CD4-positive, alpha-beta T cell (primary cell): ENCODE measurements at regions of chr13 and their contacts with region 1.

Region 1: GRCh38 chr13:27406178-27406939 is 18.1 kb upstream of the GTF3A start:
- DNase-seq: peak in 10 of 14 experiments; percentile 5 to 78 (median 23)
- ATAC-seq: peak; percentile 73
- H3K4me3 ChIP-seq: no peak overlapping the region
- H3K4me3 Mint-ChIP-seq: no peak overlapping the region
- H3K27ac ChIP-seq: no peak overlapping the region
- H3K27ac Mint-ChIP-seq: no peak overlapping the region
- H3K4me1 ChIP-seq: peaks cover 5% of the 10 kb centered on the region
- H3K4me1 Mint-ChIP-seq: no peaks in the 10 kb centered on the region
- H3K27me3 ChIP-seq: no peaks in the 10 kb centered on the region
- H3K27me3 Mint-ChIP-seq: peaks cover 17% of the 10 kb centered on the region
- CTCF ChIP-seq: peak; percentile 67

Region 2: DNA sequence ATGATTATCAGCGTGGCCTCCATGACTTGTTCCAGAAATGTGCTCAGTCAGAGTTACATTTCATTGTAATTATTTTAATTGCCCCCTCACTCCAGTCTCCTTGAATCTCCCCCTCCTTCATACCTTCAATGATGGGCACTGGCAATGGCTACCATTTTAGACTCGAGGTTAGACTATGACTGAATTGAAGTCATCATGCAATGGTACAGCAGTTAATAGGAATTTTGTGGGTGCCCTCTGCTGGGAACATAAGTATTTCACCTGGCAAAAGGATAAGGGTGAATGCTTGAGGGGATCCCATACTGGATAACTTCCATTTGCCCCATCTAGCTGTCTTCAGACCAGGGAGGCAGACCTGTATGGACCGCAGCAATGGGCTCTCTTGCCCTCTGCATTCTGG is 202.5 kb before region 1 on chr13:
- CTCF ChIA-PET with region 1: no interaction called
- POLR2A ChIA-PET with region 1: no interaction called
- intact Hi-C with region 1: no loop called
- DNase-seq: peak in 4 of 14 experiments; percentile 4 to 23 (median 14)
- ATAC-seq: no peak
- H3K4me3 ChIP-seq: no peak overlapping the region
- H3K4me3 Mint-ChIP-seq: no peak overlapping the region
- H3K27ac ChIP-seq: no peak overlapping the region
- H3K27ac Mint-ChIP-seq: no peak overlapping the region
- H3K4me1 ChIP-seq: no peaks in the 10 kb centered on the region
- H3K4me1 Mint-ChIP-seq: no peaks in the 10 kb centered on the region
- H3K27me3 ChIP-seq: no peaks in the 10 kb centered on the region
- H3K27me3 Mint-ChIP-seq: no peaks in the 10 kb centered on the region
- CTCF ChIP-seq: peak; percentile 29

Region 3: GRCh38 chr13:27424246-27425157 is 18.1 kb after region 1 on chr13 and contains the start of gene GTF3A:
- CTCF ChIA-PET with region 1: interaction called, 4 read pairs
- POLR2A ChIA-PET with region 1: interaction called, 3 read pairs
- intact Hi-C with region 1: loop called (anchors 1 to 2 kb)
- DNase-seq: peak; percentile 69 to 97 (median 87)
- ATAC-seq: peak; percentile 53
- H3K4me3 ChIP-seq: peak within 1 kb of the TSS; percentile 79
- H3K4me3 Mint-ChIP-seq: peak within 1 kb of the TSS; percentile 90
- H3K27ac ChIP-seq: peak within 1 kb of the TSS; percentile 91 to 95
- H3K27ac Mint-ChIP-seq: peak within 1 kb of the TSS; percentile 95
- H3K4me1 ChIP-seq: peaks cover 50% of the 10 kb centered on the region
- H3K4me1 Mint-ChIP-seq: peaks cover 39% of the 10 kb centered on the region
- H3K27me3 ChIP-seq: no peaks in the 10 kb centered on the region
- H3K27me3 Mint-ChIP-seq: no peaks in the 10 kb centered on the region
- CTCF ChIP-seq: no peak
- total RNA-seq, gene GTF3A: 129 to 132 TPM

Region 4: GRCh38 chr13:27481766-27482165 is 75.4 kb after region 1 on chr13:
- CTCF ChIA-PET with region 1: no interaction called
- POLR2A ChIA-PET with region 1: no interaction called
- intact Hi-C with region 1: loop called in 1 of 2 experiments (anchors 5 kb)
- DNase-seq: peak in 5 of 14 experiments; percentile 5 to 35 (median 16)
- ATAC-seq: no peak
- H3K4me3 ChIP-seq: no peak overlapping the region
- H3K4me3 Mint-ChIP-seq: no peak overlapping the region
- H3K27ac ChIP-seq: no peak overlapping the region
- H3K27ac Mint-ChIP-seq: no peak overlapping the region
- H3K4me1 ChIP-seq: peaks cover 6% of the 10 kb centered on the region
- H3K4me1 Mint-ChIP-seq: peaks cover 19% of the 10 kb centered on the region
- H3K27me3 ChIP-seq: no peaks in the 10 kb centered on the region
- H3K27me3 Mint-ChIP-seq: no peaks in the 10 kb centered on the region
- CTCF ChIP-seq: peak; percentile 30

Region 5: DNA sequence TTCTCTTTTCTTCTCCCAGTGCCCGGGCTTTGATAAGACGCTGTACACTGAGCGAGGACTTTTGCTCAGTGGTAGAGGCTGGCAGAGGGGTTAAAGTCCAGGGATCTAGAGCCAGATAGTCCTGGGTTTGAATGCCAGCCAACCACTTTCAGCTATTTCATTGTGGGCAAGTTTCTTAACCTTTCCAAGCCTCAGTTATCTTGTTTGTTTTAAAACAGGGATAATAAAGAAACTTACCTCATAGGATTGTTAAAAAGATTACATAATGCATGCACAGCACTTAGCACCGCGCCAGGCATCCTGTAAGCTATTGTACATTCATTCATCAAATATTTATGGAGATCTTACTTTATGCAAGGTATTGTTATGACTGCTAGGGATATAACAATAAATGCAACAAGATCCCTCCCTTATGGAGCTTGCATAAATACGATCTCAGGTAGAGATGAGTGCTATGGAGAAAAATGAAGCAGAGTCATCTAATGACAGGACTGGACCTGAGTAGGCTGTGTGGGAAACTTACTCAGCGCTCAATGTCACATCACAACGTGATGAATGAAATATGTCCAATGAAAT is 143.1 kb after region 1 on chr13:
- CTCF ChIA-PET with region 1: no interaction called
- POLR2A ChIA-PET with region 1: no interaction called
- intact Hi-C with region 1: loop called in 1 of 2 experiments (anchors 10 kb)
- DNase-seq: no peak
- ATAC-seq: no peak
- H3K4me3 ChIP-seq: no peak overlapping the region
- H3K4me3 Mint-ChIP-seq: no peak overlapping the region
- H3K27ac ChIP-seq: no peak overlapping the region
- H3K27ac Mint-ChIP-seq: no peak overlapping the region
- H3K4me1 ChIP-seq: no peaks in the 10 kb centered on the region
- H3K4me1 Mint-ChIP-seq: no peaks in the 10 kb centered on the region
- H3K27me3 ChIP-seq: no peaks in the 10 kb centered on the region
- H3K27me3 Mint-ChIP-seq: no peaks in the 10 kb centered on the region
- CTCF ChIP-seq: no peak

Region 6: DNA sequence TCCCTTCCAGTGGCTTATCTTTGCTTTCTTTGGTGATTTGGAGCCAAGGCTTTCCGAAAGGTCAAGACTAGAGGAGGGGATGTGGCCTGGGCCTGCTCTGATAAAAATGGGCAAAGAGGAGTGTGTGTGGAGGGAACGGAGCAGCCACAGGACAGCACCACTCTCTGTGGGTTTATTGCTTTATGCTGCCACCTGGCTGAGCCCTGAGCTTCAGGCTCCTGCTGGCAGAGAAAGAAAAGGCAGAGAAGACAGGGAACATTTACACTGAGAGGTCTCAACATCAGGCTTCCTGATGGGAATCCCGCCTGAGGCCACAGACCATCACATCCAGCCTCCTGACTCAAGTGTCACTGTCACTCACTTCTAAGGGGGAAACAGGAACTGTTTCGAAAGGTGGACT is 376.8 kb after region 1 on chr13:
- CTCF ChIA-PET with region 1: no interaction called
- POLR2A ChIA-PET with region 1: no interaction called
- intact Hi-C with region 1: loop called in 1 of 2 experiments (anchors 5 kb)
- DNase-seq: peak in 1 of 14 experiments; percentile 7
- ATAC-seq: no peak
- H3K4me3 ChIP-seq: no peak overlapping the region
- H3K4me3 Mint-ChIP-seq: no peak overlapping the region
- H3K27ac ChIP-seq: no peak overlapping the region
- H3K27ac Mint-ChIP-seq: no peak overlapping the region
- H3K4me1 ChIP-seq: no peaks in the 10 kb centered on the region
- H3K4me1 Mint-ChIP-seq: no peaks in the 10 kb centered on the region
- H3K27me3 ChIP-seq: peaks cover 7 to 46% of the 10 kb centered on the region in 2 experiments
- H3K27me3 Mint-ChIP-seq: peaks cover 39% of the 10 kb centered on the region
- CTCF ChIP-seq: no peak